Naive thymus-derived CD4-positive, alpha-beta T cell (primary cell): ENCODE measurements at regions of chr1 and their contacts with region 1.

Region 1: DNA sequence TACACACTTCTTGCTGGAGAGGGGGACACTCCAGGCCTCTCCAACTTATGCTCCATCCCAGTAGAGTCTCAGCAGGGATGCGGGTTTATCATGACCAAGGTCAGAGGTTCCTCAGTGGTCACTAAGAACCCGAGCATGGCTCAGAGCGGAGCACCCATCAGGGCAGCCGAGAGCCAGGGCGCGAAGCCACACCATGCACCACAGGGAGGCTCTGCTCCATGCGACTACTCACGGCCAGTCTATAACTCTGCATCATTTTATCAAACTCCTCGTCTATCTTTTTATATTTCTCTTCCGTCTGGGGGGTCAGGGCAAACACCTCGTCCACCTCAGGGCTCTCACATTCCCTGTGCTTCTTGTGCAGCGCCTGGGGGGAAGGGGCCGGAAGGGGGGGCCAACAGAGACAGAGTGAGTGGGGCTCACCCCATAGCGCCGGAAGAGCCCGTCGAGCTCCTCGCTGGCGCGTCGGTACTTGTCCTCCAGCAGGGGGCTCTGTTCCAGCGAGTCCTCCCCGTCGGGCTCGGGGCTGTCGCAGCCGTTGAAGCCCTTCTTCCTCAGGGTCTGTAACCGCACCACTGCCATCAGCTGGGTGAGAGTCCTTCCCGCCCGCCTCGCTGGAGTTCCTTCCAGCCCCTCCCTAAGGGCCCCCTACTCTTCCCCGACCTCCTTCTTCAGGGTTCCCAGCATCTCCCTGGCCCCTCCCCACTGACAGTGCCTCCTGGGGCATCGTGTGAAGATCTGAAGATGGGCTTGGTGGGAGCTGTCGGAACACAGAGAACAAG is 20.0 kb downstream of the MEF2D start:
- DNase-seq: peak; percentile 63 to 88 (median 79)
- ATAC-seq: peak; percentile 87
- H3K4me3 ChIP-seq: no peak overlapping the region
- H3K4me3 Mint-ChIP-seq: peak overlapping the region in 6 of 10 donors; percentile 23 to 51 (median 43)
- H3K27ac ChIP-seq: peak overlapping the region; percentile 46
- H3K27ac Mint-ChIP-seq: peak overlapping the region; percentile 74 to 99 (median 89)
- H3K4me1 ChIP-seq: peaks cover 12 to 25% of the 10 kb centered on the region in 2 donors
- H3K4me1 Mint-ChIP-seq: peaks cover 42 to 67% (median 54%) of the 10 kb centered on the region in 7 donors
- H3K27me3 ChIP-seq: no peaks in the 10 kb centered on the region
- H3K27me3 Mint-ChIP-seq: no peaks in the 10 kb centered on the region

Region 2: GRCh38 chr1:156096640-156097391 is 383.8 kb before region 1 on chr1:
- CTCF ChIA-PET with region 1: no interaction called
- POLR2A ChIA-PET with region 1: no interaction called
- intact Hi-C with region 1: no loop called
- DNase-seq: peak; percentile 77 to 91 (median 80)
- ATAC-seq: peak; percentile 87
- H3K4me3 ChIP-seq: peak overlapping the region; percentile 10
- H3K4me3 Mint-ChIP-seq: peak overlapping the region; percentile 31 to 83 (median 72)
- H3K27ac ChIP-seq: peak overlapping the region; percentile 63
- H3K27ac Mint-ChIP-seq: peak overlapping the region; percentile 76 to 95 (median 91)
- H3K4me1 ChIP-seq: peaks cover 18 to 22% of the 10 kb centered on the region in 2 donors
- H3K4me1 Mint-ChIP-seq: peaks cover 18 to 45% (median 26%) of the 10 kb centered on the region in 7 donors
- H3K27me3 ChIP-seq: no peaks in the 10 kb centered on the region
- H3K27me3 Mint-ChIP-seq: peaks cover 0 to 52% (median 0%) of the 10 kb centered on the region in 5 donors

Region 3: DNA sequence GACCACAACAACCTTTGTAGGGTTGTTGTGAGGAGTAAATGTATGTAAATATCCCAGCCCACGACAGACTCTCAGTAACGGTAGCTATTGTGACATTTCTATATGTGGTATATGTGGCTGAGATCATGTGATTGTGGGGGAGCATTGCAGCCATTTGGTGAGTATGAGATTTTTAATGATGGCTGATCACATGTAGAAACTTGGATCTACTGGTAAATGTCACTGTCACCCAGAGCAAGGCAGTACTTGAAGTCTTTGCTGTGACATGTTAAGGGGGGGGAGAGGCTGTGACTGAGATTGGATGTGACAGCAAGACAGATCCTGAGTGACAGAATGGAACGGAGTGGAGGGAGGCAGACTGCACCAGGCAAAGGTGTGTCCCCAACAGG is 43.9 kb after region 1 on chr1:
- CTCF ChIA-PET with region 1: interaction called, 3 read pairs
- POLR2A ChIA-PET with region 1: no interaction called
- intact Hi-C with region 1: loop called (anchors 5 kb)
- DNase-seq: peak in 1 of 9 donors; percentile 14
- ATAC-seq: peak; percentile 71
- H3K4me3 ChIP-seq: no peak overlapping the region
- H3K4me3 Mint-ChIP-seq: peak overlapping the region in 9 of 10 donors; percentile 27 to 71 (median 58)
- H3K27ac ChIP-seq: no peak overlapping the region
- H3K27ac Mint-ChIP-seq: peak overlapping the region; percentile 4 to 86 (median 57)
- H3K4me1 ChIP-seq: peaks cover 23 to 31% of the 10 kb centered on the region in 2 donors
- H3K4me1 Mint-ChIP-seq: peaks cover 34 to 43% (median 36%) of the 10 kb centered on the region in 7 donors
- H3K27me3 ChIP-seq: no peaks in the 10 kb centered on the region
- H3K27me3 Mint-ChIP-seq: no peaks in the 10 kb centered on the region

Region 4: GRCh38 chr1:156549385-156549784 is 68.8 kb after region 1 on chr1:
- CTCF ChIA-PET with region 1: no interaction called
- POLR2A ChIA-PET with region 1: no interaction called
- intact Hi-C with region 1: loop called in 1 of 2 experiments (anchors 2 kb)
- DNase-seq: no peak
- ATAC-seq: no peak
- H3K4me3 ChIP-seq: no peak overlapping the region
- H3K4me3 Mint-ChIP-seq: no peak overlapping the region
- H3K27ac ChIP-seq: no peak overlapping the region
- H3K27ac Mint-ChIP-seq: no peak overlapping the region
- H3K4me1 ChIP-seq: no peaks in the 10 kb centered on the region
- H3K4me1 Mint-ChIP-seq: peaks cover 0 to 5% (median 4%) of the 10 kb centered on the region in 7 donors
- H3K27me3 ChIP-seq: no peaks in the 10 kb centered on the region
- H3K27me3 Mint-ChIP-seq: no peaks in the 10 kb centered on the region

Region 5: DNA sequence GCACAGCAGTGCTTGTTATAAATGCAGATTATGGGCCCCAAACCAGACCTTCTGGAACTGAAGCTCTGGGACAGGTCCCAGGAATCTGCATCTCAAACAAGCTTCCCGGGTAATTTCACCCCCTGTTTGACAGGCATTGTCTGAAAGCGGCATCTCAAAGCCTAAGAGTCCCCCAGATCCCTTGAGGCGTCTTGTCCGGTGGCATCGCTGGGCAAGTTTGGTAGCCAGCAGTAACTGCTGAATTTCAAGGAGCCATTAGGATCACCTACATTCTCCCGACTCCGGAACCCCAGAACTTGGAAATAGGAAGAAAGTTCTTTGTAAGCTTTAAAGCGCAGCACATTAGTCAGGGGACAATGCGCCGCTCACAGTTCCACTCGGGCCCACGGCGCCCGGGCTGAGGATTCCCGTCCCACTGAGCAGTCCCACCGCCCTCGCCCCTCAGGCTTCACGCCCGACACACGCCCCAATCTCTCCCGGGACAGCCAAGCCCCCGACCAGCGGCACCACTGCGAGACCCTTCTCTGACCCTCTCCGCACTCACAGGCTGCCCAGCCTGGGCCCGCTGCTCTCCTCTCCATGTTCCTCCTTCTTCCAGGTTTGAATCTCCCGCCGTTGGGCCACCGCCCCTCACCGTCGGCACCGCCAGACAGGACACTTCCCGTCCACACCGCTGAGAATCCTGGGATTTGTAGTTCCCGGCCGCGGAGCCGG is 91.5 kb after region 1 on chr1 and contains the start of gene IQGAP3:
- CTCF ChIA-PET with region 1: interaction called, 4 read pairs
- POLR2A ChIA-PET with region 1: no interaction called
- intact Hi-C with region 1: loop called (anchors 2 kb)
- DNase-seq: peak; percentile 49 to 74 (median 63)
- ATAC-seq: peak; percentile 93
- H3K4me3 ChIP-seq: peak within 1 kb of the TSS; percentile 41
- H3K4me3 Mint-ChIP-seq: peak within 1 kb of the TSS; percentile 69 to 94 (median 84)
- H3K27ac ChIP-seq: no peak within 1 kb of the TSS
- H3K27ac Mint-ChIP-seq: peak within 1 kb of the TSS in 5 of 9 donors; percentile 38 to 84 (median 59)
- H3K4me1 ChIP-seq: peaks cover 4 to 9% of the 10 kb centered on the region in 2 donors
- H3K4me1 Mint-ChIP-seq: peaks cover 10 to 27% (median 19%) of the 10 kb centered on the region in 7 donors
- H3K27me3 ChIP-seq: peaks cover 0 to 16% of the 10 kb centered on the region in 2 donors
- H3K27me3 Mint-ChIP-seq: peaks cover 16 to 41% (median 32%) of the 10 kb centered on the region in 5 donors
- total RNA-seq, gene IQGAP3: 0.24 to 14.4 TPM in 2 of 5 experiments, not detected in the others

Region 6: GRCh38 chr1:156583821-156584622 is 103.4 kb after region 1 on chr1:
- CTCF ChIA-PET with region 1: interaction called, 13 read pairs
- POLR2A ChIA-PET with region 1: interaction called, 4 read pairs
- intact Hi-C with region 1: loop called in 1 of 2 experiments (anchors 2 kb)
- DNase-seq: peak in 8 of 9 donors; percentile 49 to 76 (median 69)
- ATAC-seq: peak; percentile 81
- H3K4me3 ChIP-seq: no peak overlapping the region
- H3K4me3 Mint-ChIP-seq: peak overlapping the region in 8 of 10 donors; percentile 9 to 77 (median 54)
- H3K27ac ChIP-seq: peak overlapping the region; percentile 3
- H3K27ac Mint-ChIP-seq: peak overlapping the region in 8 of 9 donors; percentile 26 to 88 (median 72)
- H3K4me1 ChIP-seq: peaks cover 15 to 25% of the 10 kb centered on the region in 2 donors
- H3K4me1 Mint-ChIP-seq: peaks cover 6 to 40% (median 29%) of the 10 kb centered on the region in 7 donors
- H3K27me3 ChIP-seq: no peaks in the 10 kb centered on the region
- H3K27me3 Mint-ChIP-seq: no peaks in the 10 kb centered on the region